IMR-90 (cell line): ENCODE measurements at regions of chr13 and their contacts with region 1.

Region 1: DNA sequence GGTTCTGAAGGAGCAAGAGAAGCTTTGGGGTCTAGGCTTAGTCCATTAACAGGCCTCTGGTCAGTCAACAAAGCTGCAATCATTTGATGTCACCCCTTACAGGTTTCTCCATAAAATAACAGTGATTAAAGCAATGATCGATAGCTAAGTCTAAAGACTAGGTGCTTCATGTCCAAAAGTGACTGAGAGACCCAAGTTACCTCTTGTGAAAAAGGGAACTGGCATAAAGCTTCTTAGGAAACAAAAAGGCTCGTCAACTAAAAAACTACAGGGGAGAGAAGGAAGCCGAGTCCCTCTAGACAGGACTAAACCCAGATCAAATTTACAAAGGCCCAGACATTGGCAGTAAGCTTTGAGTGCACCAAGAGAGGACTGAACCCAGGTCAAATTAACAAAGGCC is 2.2 kb downstream of the DCUN1D2 start:
- DNase-seq: no peak
- ATAC-seq: no peak
- H3K4me3 ChIP-seq: no peak overlapping the region
- H3K27ac ChIP-seq: no peak overlapping the region
- H3K4me1 ChIP-seq: peaks cover 6% of the 10 kb centered on the region; the same call in 1 of the 2 replicates
- H3K27me3 ChIP-seq: no peaks in the 10 kb centered on the region
- CTCF ChIP-seq: no peak
- POLR2A ChIP-seq: no peak
- RAD21 ChIP-seq: no peak

Region 2: GRCh38 chr13:113477724-113478123 is 10.6 kb before region 1 on chr13:
- CTCF ChIA-PET with region 1: interaction called, 3 read pairs
- POLR2A ChIA-PET with region 1: interaction called, 8 read pairs
- dilution Hi-C with region 1: no loop called
- in situ Hi-C with region 1: no loop called
- intact Hi-C with region 1: loop called (anchors 1 kb)
- DNase-seq: peak; percentile 28
- ATAC-seq: no peak
- H3K4me3 ChIP-seq: no peak overlapping the region
- H3K27ac ChIP-seq: no peak overlapping the region
- H3K4me1 ChIP-seq: peaks cover 2% of the 10 kb centered on the region; the same call in 1 of the 2 replicates
- H3K27me3 ChIP-seq: no peaks in the 10 kb centered on the region
- CTCF ChIP-seq: no peak
- POLR2A ChIP-seq: no peak
- RAD21 ChIP-seq: no peak